B cell (primary cell): ENCODE measurements at regions of chr3 and their contacts with region 1.

Region 1: DNA sequence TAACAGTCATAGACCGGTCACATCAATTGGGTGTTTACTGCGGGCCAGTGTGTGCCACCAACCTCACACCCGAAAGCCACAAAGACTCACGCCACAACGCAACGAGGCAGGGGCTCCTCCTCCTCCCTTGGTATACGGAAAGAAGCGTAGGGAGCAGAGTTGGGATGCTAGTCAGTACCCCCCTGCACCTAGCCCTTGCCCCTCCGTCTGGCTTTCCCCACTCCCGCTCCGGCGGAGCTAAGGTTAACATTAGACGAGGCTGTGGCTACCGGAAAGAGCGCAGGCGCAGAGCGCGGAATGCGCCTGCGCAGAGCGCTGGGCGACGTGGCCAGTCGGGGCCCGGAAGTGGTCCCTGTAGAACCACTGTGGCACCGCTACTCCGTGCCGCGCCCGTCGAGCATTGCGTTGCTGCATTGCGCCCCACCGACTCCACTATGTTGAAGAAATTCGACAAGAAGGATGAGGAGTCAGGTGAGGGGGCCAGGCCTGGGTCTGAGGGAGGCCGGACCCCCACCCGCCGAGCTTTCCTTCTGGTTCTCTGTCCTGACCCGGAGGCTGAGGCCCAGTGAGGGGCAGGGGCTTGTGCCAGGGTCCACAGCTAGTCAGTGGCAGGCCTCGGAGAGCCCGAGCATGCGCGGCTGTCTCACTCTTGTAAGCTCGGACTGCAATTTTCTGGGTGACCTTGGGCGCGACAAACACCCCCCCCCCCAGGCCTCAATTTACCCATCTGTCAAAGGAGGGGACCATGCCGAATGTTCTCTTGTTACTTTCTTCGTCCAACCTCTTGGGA is at the start of gene COPG1:
- DNase-seq: peak; percentile 92
- ATAC-seq: peak; percentile 85
- H3K4me3 ChIP-seq: peak within 1 kb of the TSS; percentile 88 to 99 (median 95)
- H3K4me3 Mint-ChIP-seq: peak within 1 kb of the TSS; percentile 95
- H3K27ac ChIP-seq: peak within 1 kb of the TSS; percentile 64 to 79
- H3K27ac Mint-ChIP-seq: peak within 1 kb of the TSS; percentile 94
- H3K4me1 ChIP-seq: peaks cover 16 to 29% of the 10 kb centered on the region in 2 donors
- H3K4me1 Mint-ChIP-seq: peaks cover 26% of the 10 kb centered on the region
- H3K27me3 ChIP-seq: no peaks in the 10 kb centered on the region
- H3K27me3 Mint-ChIP-seq: no peaks in the 10 kb centered on the region
- CTCF ChIP-seq: no peak
- total RNA-seq, gene COPG1: 85.9 and 87.6 TPM in 2 replicates

Region 2: GRCh38 chr3:128617557-128618397 is 631.7 kb before region 1 on chr3:
- CTCF ChIA-PET with region 1: interaction called, 4 read pairs
- POLR2A ChIA-PET with region 1: no interaction called
- intact Hi-C with region 1: loop called (anchors 5 kb)
- DNase-seq: peak; percentile 99
- ATAC-seq: peak; percentile 95
- H3K4me3 ChIP-seq: peak overlapping the region; percentile 67 to 98 (median 78)
- H3K4me3 Mint-ChIP-seq: peak overlapping the region; percentile 96
- H3K27ac ChIP-seq: peak overlapping the region; percentile 71 to 90
- H3K27ac Mint-ChIP-seq: peak overlapping the region; percentile 91
- H3K4me1 ChIP-seq: peaks cover 11 to 23% of the 10 kb centered on the region in 2 donors
- H3K4me1 Mint-ChIP-seq: peaks cover 25% of the 10 kb centered on the region
- H3K27me3 ChIP-seq: no peaks in the 10 kb centered on the region
- H3K27me3 Mint-ChIP-seq: no peaks in the 10 kb centered on the region
- CTCF ChIP-seq: peak; percentile 99

Region 3: DNA sequence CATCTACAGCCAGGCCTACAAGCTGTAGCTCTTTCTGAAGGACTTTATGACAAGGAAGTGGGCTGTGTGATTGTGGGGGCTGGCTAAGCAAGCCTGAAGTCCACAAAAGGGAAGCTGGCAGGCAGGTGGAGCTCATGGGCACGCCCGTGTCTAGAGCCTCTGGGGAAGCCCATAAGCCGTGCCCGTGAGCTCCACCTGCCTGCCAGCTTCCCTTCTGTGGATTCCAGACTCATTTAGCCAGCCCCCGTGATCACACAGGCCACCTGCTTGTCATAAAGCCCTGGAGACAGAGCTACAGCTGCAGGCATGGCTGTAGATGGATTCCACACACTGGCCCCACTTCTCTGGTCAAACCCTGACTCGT is 233.1 kb before region 1 on chr3:
- CTCF ChIA-PET with region 1: interaction called, 19 read pairs
- POLR2A ChIA-PET with region 1: interaction called, 4 read pairs
- intact Hi-C with region 1: loop called (anchors 2 kb)
- DNase-seq: peak; percentile 92
- ATAC-seq: peak; percentile 86
- H3K4me3 ChIP-seq: peak overlapping the region in 3 of 5 experiments; percentile 5 to 28 (median 18)
- H3K4me3 Mint-ChIP-seq: peak overlapping the region; percentile 79
- H3K27ac ChIP-seq: peak overlapping the region; percentile 85 to 96
- H3K27ac Mint-ChIP-seq: peak overlapping the region; percentile 97
- H3K4me1 ChIP-seq: peaks cover 33 to 35% of the 10 kb centered on the region in 2 donors
- H3K4me1 Mint-ChIP-seq: peaks cover 41% of the 10 kb centered on the region
- H3K27me3 ChIP-seq: no peaks in the 10 kb centered on the region
- H3K27me3 Mint-ChIP-seq: no peaks in the 10 kb centered on the region
- CTCF ChIP-seq: peak; percentile 41

Region 4: DNA sequence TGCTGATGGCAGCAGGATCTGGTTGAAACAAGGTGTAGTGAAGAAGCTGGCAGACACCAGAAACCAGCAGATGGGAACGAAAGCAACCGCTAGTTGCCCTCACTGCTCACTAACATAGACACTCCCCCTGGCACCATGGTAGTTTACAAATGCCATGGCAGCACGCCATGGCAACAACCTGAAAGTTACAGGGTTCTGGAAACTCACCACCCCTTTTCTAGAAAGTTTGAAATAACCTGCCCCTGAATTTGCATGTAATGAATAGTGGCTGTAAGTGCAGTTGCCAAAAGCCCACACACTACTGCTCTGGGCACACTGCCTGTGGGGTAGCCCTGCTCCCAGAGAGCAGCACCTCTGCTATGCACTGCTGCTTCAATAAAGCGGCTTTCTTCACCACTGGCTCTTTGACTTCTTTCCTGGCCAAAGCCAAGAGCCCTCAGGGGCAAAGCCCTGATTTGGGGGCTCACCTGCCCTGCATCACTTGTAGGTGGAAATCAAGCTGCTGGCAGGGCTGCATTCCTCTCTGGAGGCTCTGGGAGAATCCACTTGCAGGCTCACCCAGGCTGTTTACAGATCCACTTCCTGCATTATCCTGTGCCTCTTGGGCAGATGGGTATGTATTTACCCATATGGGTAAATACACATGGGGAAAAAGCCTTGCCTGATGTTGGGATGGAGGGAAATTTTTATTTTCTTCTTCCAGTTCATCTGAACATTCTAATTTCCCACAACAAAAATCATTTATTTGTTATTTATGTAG is 190.8 kb before region 1 on chr3:
- CTCF ChIA-PET with region 1: interaction called, 294 read pairs
- POLR2A ChIA-PET with region 1: no interaction called
- intact Hi-C with region 1: loop called (anchors 1 kb)
- DNase-seq: peak; percentile 53
- ATAC-seq: peak; percentile 45
- H3K4me3 ChIP-seq: no peak overlapping the region
- H3K4me3 Mint-ChIP-seq: no peak overlapping the region
- H3K27ac ChIP-seq: no peak overlapping the region
- H3K27ac Mint-ChIP-seq: no peak overlapping the region
- H3K4me1 ChIP-seq: peaks cover 5 to 21% of the 10 kb centered on the region in 2 donors
- H3K4me1 Mint-ChIP-seq: peaks cover 10% of the 10 kb centered on the region
- H3K27me3 ChIP-seq: peaks cover 0 to 29% (median 7%) of the 10 kb centered on the region in 4 experiments
- H3K27me3 Mint-ChIP-seq: peaks cover 35% of the 10 kb centered on the region
- CTCF ChIP-seq: no peak

Region 5: DNA sequence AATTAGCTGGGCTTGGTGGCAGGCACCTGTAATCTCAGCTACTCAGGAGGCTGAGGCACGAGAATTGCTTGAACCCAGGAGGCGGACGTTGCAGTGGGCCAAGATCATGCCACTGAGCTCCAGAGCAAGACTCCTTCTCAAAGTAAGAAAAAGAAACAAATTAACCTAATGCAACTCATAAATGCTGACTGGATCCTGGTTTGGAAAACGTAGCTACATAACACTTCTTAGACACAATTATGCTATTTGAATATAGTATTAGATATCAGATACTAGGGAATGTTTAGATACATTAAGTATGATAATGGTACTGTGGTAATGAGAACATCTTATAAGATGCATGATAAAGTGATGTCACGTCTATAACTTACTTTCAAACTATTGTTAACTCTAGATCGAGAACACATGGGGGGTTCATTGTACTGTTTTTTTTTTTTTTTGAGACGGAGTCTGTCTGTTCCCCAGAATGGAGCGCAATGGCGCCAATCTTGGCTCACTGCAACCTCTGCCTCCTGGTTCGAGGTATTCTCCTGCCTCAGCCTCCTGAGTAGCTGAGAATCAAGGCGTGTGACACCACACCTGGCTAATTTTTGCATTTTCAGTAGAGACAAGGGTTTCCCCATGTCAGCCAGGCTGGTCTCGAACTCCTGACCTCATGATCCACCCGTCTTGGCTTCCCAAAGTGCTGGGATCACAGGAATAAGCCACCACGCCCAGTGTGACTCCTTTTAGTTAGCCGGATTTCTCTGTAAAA is 82.7 kb before region 1 on chr3:
- CTCF ChIA-PET with region 1: interaction called, 70 read pairs
- POLR2A ChIA-PET with region 1: interaction called, 4 read pairs
- intact Hi-C with region 1: loop called (anchors 1 kb)
- DNase-seq: no peak
- ATAC-seq: no peak
- H3K4me3 ChIP-seq: no peak overlapping the region
- H3K4me3 Mint-ChIP-seq: no peak overlapping the region
- H3K27ac ChIP-seq: no peak overlapping the region
- H3K27ac Mint-ChIP-seq: no peak overlapping the region
- H3K4me1 ChIP-seq: peaks cover 6 to 7% of the 10 kb centered on the region in 2 donors
- H3K4me1 Mint-ChIP-seq: peaks cover 16% of the 10 kb centered on the region
- H3K27me3 ChIP-seq: no peaks in the 10 kb centered on the region
- H3K27me3 Mint-ChIP-seq: no peaks in the 10 kb centered on the region
- CTCF ChIP-seq: no peak

Region 6: GRCh38 chr3:129224984-129225393 is 24.5 kb before region 1 on chr3:
- CTCF ChIA-PET with region 1: interaction called, 98 read pairs
- POLR2A ChIA-PET with region 1: no interaction called
- intact Hi-C with region 1: no loop called
- DNase-seq: no peak
- ATAC-seq: no peak
- H3K4me3 ChIP-seq: no peak overlapping the region
- H3K4me3 Mint-ChIP-seq: no peak overlapping the region
- H3K27ac ChIP-seq: no peak overlapping the region
- H3K27ac Mint-ChIP-seq: peak overlapping the region; percentile 53
- H3K4me1 ChIP-seq: peaks cover 8 to 23% of the 10 kb centered on the region in 2 donors
- H3K4me1 Mint-ChIP-seq: peaks cover 28% of the 10 kb centered on the region
- H3K27me3 ChIP-seq: no peaks in the 10 kb centered on the region
- H3K27me3 Mint-ChIP-seq: no peaks in the 10 kb centered on the region
- CTCF ChIP-seq: no peak

Region 7: GRCh38 chr3:129316131-129317013 is 66.9 kb after region 1 on chr3:
- CTCF ChIA-PET with region 1: interaction called, 17 read pairs
- POLR2A ChIA-PET with region 1: interaction called, 15 read pairs
- intact Hi-C with region 1: no loop called
- DNase-seq: peak; percentile 88
- ATAC-seq: peak; percentile 45
- H3K4me3 ChIP-seq: peak overlapping the region; percentile 30 to 84 (median 82)
- H3K4me3 Mint-ChIP-seq: peak overlapping the region; percentile 82
- H3K27ac ChIP-seq: peak overlapping the region in 1 of 2 donors; percentile 78
- H3K27ac Mint-ChIP-seq: peak overlapping the region; percentile 87
- H3K4me1 ChIP-seq: peaks cover 26 to 40% of the 10 kb centered on the region in 2 donors
- H3K4me1 Mint-ChIP-seq: peaks cover 27% of the 10 kb centered on the region
- H3K27me3 ChIP-seq: peaks cover 0 to 30% (median 15%) of the 10 kb centered on the region in 4 experiments
- H3K27me3 Mint-ChIP-seq: peaks cover 18% of the 10 kb centered on the region
- CTCF ChIP-seq: peak; percentile 71